Posterior vena cava (tissue), 2 donors: ENCODE measurements at regions of chr4 and their contacts with region 1.

Region 1: GRCh38 chr4:78951862-78952472 is 12.7 kb upstream of the PAQR3 start:
- DNase-seq: no peak

Region 2: GRCh38 chr4:80202190-80202711 is 1250.3 kb after region 1 on chr4:
- intact Hi-C with region 1: loop called in 1 of 2 experiments (anchors 10 kb)
- DNase-seq: peak; percentile 96